Left cardiac atrium (tissue), 4 donors: ENCODE measurements at regions of chr1 and their contacts with region 1.

Region 1: GRCh38 chr1:220879076-220879508 is at the start of gene HLX:
- DNase-seq: peak; percentile 93
- ATAC-seq: peak; percentile 91 to 95
- total RNA-seq, gene HLX: 4.5 to 10.7 TPM

Region 2: DNA sequence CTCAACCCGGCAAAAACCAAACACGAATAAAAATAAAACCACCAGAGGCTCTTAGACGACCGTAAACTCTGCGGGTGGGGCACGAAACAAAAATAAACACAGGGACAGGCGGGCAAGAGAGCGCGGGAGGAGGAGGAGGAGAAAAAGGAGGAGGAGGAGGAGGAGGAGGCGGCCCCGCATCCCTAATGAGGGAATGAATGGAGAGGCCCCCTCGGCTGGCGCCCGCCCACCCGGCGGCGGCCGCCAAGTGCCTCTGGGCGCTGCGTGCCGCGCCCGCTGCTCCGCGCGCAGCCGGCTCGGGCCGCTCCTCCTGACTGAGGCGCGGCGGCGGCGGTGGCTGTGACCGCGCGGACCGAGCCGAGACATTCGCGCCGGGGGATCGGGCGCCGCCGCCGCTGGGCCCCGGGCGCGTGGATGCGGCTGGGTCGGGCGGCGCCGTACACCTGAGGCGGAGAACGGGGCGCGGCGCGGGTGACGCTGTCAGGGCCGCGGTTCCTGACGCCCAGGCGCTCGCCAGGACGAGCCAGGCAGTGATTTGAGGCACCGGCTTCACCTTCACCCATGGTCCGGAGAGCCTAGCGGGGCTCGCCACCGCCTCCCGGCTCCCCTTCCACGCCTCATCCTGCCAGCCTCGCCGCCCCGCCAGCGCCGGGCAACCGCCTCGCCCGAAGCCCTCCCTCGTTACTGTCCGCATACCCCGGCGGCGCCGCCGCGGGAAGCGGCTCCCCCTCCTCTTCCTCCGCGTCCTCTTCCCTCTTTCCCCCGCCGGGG is 351.0 kb before region 1 on chr1 and contains the start of gene MARK1:
- intact Hi-C with region 1: no loop called
- DNase-seq: peak; percentile 79
- ATAC-seq: peak; percentile 94 to 95
- total RNA-seq, gene MARK1: 16.7 to 17.7 TPM

Region 3: GRCh38 chr1:220579317-220579716 is 299.8 kb before region 1 on chr1:
- intact Hi-C with region 1: no loop called
- DNase-seq: no peak
- ATAC-seq: no peak

Region 4: DNA sequence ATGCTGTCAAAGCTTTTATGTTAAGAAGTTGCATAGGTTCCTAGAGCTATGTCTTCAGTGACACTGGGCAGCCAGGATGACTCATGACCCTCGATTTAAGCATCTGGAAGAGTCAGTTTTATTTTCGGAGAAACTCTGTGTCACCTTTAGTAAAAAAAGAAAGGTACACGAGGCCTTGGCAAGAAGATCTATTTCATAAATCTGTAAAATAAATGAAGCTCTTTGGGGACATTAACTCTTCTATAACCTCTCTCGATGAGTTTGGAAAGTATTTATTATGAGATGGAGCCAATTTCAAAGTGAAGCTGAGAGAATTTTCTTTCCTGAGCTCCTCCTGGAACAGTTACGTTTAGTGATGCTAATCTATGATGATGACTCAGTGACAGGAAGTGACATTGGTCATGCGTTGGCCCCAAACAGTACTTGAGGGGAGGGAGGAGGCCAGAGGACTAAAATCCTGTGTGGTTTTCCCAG is 156.6 kb after region 1 on chr1:
- intact Hi-C with region 1: loop called in 1 of 2 experiments (anchors 10 kb)
- DNase-seq: no peak
- ATAC-seq: no peak

Region 5: DNA sequence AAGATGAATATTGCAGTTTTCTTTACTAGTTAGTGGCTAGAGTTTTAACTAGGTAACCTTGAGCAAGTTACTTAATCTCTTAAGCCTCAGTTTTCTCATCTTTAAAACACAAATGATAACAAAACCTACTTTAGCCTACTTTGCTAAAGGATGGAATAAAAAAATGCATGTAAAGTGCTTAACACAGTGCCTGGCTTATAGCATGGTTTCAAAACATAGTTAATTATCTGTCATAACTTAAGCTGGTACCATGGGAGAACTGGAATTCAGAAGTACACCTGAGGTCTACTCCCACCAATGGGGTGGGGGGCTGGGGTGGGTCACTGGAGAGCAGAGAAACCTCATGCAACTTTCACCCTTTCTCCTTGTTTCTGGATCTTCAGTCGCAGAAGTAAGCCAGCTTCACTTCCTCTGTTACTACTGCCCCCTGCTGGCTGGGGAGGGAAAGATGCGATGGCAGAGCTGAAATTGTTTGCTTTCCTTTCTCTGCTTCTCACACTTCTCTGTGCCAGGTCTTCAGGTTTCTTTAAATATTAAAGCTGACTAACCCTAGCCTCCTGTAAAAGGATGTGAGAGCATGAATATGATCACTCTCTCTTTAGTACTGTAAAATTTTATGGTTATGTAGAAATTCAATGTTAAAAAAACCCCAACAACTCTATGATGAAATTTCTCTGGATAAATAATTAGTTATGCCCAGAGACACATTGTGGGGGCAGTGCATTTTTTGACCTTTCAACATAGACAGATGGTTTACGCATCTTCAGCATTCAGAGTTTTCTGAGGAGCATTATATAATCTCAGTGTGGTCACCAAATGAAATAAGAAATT is 324.3 kb after region 1 on chr1:
- intact Hi-C with region 1: loop called (anchors 5 to 10 kb)
- DNase-seq: peak; percentile 74
- ATAC-seq: peak; percentile 53 to 75

Region 6: DNA sequence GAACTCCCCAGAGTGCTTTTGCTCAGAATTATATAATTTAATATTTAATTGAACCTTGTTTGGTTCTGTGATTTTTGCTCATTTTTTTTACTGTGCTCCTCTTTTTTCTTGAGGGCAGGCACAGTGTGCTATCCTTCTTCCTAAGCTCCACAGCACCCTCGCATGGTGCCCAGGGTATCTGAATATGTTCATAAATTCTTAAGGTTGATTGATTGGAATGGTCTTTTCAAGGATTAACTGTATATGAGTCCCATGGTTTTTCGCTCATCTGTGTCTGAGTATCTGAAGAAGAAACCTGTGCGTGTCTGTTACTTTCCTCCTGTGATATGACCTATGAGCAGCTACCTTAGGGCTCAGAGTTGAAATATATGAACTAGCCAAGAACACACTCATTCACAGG is 393.8 kb after region 1 on chr1:
- intact Hi-C with region 1: loop called in 1 of 2 experiments (anchors 10 kb)
- DNase-seq: no peak
- ATAC-seq: no peak